IMR-90 (cell line): ENCODE measurements at regions of chr5 and their contacts with region 1.

Region 1: DNA sequence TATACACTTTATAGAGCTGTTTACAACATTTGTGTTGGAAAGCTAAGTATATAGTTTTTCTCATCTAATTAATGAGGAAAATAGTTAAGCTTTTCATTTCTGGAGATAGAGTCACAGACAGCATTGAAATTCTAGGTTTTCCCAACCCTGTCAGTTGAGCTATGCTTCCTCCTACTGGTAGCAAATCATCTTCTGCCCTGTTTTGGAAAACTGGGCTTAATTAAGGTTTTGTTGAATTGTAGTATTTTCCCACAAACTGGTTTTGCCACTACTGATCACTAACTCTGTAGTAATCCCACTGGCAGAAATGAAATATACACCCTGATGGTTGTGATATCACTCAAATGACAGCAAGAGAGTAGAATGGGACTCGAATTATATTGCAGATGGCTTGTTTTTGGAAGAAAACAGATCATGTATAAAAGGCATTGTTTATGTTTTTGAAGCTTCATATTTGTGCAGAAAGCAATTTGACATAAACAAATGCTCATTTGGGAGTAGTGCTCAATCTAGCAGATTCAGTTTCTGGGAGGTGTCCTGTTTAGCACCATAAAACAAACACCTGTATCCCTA is 46.6 kb downstream of the CD180 start:
- DNase-seq: peak; percentile 48
- ATAC-seq: peak; percentile 65; the same call in 1 of the 2 replicates
- H3K4me3 ChIP-seq: no peak overlapping the region
- H3K27ac ChIP-seq: no peak overlapping the region
- H3K4me1 ChIP-seq: peaks cover 2% of the 10 kb centered on the region; the same call in 1 of the 2 replicates
- H3K27me3 ChIP-seq: no peaks in the 10 kb centered on the region
- CTCF ChIP-seq: peak; percentile 79
- POLR2A ChIP-seq: no peak
- RAD21 ChIP-seq: peak; percentile 88

Region 2: DNA sequence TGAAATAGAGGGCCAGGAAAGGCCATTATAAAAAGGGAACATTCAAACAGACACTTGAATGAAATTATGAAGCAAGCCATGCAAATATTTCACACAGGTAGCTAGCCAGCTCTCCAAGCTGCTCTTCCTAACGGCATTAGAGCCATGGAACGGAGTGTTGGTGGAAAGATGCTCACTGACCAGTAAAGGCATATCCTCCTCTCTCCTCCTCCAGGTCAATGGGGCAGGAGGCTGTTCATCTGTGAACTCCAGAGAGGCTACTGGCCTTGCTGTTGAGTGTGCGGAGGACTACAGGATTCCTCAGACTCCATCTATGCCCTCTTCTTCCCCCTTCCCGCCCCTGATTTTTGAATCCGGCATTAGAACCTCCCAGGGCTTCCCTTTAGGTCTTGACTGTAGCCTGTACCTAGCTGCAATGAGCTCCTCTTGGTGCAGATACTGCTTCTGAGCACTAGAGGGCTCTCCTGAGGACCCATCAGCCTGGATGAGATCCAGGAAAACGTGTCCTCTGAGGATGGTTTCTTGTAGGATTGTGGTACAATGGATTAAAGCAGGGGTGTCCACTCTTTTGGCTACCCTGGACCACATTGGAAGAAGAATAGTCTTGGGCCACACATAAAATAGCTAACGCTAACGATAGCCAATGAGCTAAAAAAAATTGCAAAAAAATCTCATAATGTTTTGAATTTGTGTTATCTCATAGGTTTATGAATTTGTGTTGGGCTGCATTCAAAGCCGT is 843.8 kb before region 1 on chr5:
- CTCF ChIA-PET with region 1: no interaction called
- POLR2A ChIA-PET with region 1: no interaction called
- dilution Hi-C with region 1: no loop called
- in situ Hi-C with region 1: no loop called
- intact Hi-C with region 1: loop called (anchors 5 kb)
- DNase-seq: peak; percentile 63
- ATAC-seq: peak; percentile 97
- H3K4me3 ChIP-seq: no peak overlapping the region
- H3K27ac ChIP-seq: no peak overlapping the region
- H3K4me1 ChIP-seq: no peaks in the 10 kb centered on the region
- H3K27me3 ChIP-seq: peaks cover 5% of the 10 kb centered on the region
- CTCF ChIP-seq: peak; percentile 80
- POLR2A ChIP-seq: no peak
- RAD21 ChIP-seq: peak; percentile 42

Region 3: DNA sequence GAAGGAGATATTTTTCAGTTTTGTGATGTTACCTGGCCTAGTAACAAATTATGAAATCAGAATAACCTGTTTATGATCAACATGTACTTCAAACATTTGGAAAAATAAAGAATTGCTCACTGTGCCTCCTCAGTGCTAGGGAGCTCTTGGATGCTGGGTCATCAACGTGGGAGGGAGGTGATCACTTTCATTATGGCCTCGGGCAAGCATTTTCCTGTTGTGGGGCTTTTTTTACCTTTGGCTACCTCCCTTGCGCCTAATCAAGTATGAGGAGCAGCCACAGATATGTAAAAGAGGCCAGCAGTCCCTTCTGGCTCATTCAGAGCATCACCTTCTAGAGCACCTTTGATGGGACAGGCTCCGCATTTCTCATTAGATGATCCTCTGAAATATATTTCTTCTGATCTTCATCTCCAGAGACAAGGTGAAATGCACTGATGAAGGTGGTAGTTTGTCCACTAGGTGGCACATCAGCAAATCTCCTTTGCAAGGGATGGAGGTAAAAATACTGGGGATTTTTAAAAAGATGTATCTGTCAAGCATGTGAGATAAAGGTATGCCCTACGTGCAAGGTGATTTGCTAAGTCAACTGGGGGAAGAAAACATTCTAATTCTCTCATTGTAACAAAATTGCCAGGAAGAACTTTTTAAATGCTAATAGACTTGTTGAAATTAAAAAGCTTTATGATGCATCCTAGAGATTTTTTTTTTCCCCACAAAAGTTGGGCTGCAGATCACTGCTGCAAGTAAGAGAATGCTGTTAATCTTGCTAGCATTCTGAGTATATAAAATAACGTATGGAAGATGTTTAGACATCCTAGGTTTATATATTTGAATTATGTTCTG is 335.7 kb before region 1 on chr5:
- CTCF ChIA-PET with region 1: interaction called, 8 read pairs
- POLR2A ChIA-PET with region 1: no interaction called
- dilution Hi-C with region 1: no loop called
- in situ Hi-C with region 1: loop called (anchors 5 kb)
- intact Hi-C with region 1: loop called (anchors 1 kb)
- DNase-seq: peak; percentile 63
- ATAC-seq: peak; percentile 77
- H3K4me3 ChIP-seq: no peak overlapping the region
- H3K27ac ChIP-seq: no peak overlapping the region
- H3K4me1 ChIP-seq: no peaks in the 10 kb centered on the region
- H3K27me3 ChIP-seq: peaks cover 17% of the 10 kb centered on the region
- CTCF ChIP-seq: peak; percentile 73
- POLR2A ChIP-seq: no peak
- RAD21 ChIP-seq: peak; percentile 68

Region 4: GRCh38 chr5:66864331-66864840 is 285.7 kb before region 1 on chr5:
- CTCF ChIA-PET with region 1: no interaction called
- POLR2A ChIA-PET with region 1: no interaction called
- dilution Hi-C with region 1: no loop called
- in situ Hi-C with region 1: no loop called
- intact Hi-C with region 1: loop called (anchors 5 kb)
- DNase-seq: peak; percentile 47
- ATAC-seq: peak; percentile 64
- H3K4me3 ChIP-seq: no peak overlapping the region
- H3K27ac ChIP-seq: no peak overlapping the region
- H3K4me1 ChIP-seq: no peaks in the 10 kb centered on the region
- H3K27me3 ChIP-seq: peaks cover 12% of the 10 kb centered on the region
- CTCF ChIP-seq: peak; percentile 54
- POLR2A ChIP-seq: no peak
- RAD21 ChIP-seq: peak; percentile 57

Region 5: DNA sequence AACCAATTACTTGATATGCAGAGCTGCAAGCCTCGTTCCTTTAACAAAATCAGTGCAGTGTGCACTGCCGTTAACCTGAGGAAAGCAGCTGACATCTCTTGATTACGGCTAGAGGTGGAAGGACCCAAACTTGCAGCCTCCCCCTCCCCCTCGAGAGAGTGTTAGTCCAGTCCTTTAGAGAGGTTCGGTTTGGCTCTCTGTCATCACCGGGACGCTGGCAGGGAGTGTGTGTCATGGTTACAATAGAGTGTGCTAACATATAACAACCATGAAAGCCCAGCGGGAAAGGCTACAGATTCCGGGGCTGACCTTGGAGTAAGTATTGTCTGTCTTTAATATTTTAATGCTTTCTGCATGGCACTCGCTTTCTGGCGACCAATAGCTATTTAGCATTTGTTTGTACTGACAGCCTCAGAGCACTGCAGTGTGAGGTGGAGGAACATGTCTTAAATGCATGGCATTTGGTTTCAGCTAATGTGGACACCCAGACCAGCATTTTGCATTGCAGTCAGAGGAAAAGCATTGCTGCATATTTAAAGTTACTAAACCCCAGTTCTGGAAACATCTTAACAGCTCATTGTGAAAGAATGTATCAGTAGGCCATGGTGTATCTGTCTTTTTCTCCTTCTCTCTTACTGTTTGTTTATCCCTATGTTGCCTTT is 190.9 kb before region 1 on chr5:
- CTCF ChIA-PET with region 1: interaction called, 7 read pairs
- POLR2A ChIA-PET with region 1: interaction called, 4 read pairs
- dilution Hi-C with region 1: no loop called
- in situ Hi-C with region 1: no loop called
- intact Hi-C with region 1: loop called (anchors 1 kb)
- DNase-seq: peak; percentile 80
- ATAC-seq: peak; percentile 62
- H3K4me3 ChIP-seq: peak overlapping the region; percentile 51
- H3K27ac ChIP-seq: peak overlapping the region; percentile 81
- H3K4me1 ChIP-seq: peaks cover 8% of the 10 kb centered on the region
- H3K27me3 ChIP-seq: no peaks in the 10 kb centered on the region
- CTCF ChIP-seq: no peak
- POLR2A ChIP-seq: no peak
- RAD21 ChIP-seq: no peak

Region 6: GRCh38 chr5:66987949-66988838 is 161.8 kb before region 1 on chr5:
- CTCF ChIA-PET with region 1: interaction called, 4 read pairs
- POLR2A ChIA-PET with region 1: no interaction called
- dilution Hi-C with region 1: no loop called
- in situ Hi-C with region 1: no loop called
- intact Hi-C with region 1: loop called (anchors 2 kb)
- DNase-seq: peak; percentile 26
- ATAC-seq: peak; percentile 67
- H3K4me3 ChIP-seq: no peak overlapping the region
- H3K27ac ChIP-seq: no peak overlapping the region
- H3K4me1 ChIP-seq: peaks cover 6% of the 10 kb centered on the region
- H3K27me3 ChIP-seq: no peaks in the 10 kb centered on the region
- CTCF ChIP-seq: peak; percentile 70
- POLR2A ChIP-seq: no peak
- RAD21 ChIP-seq: peak; percentile 65

Region 7: DNA sequence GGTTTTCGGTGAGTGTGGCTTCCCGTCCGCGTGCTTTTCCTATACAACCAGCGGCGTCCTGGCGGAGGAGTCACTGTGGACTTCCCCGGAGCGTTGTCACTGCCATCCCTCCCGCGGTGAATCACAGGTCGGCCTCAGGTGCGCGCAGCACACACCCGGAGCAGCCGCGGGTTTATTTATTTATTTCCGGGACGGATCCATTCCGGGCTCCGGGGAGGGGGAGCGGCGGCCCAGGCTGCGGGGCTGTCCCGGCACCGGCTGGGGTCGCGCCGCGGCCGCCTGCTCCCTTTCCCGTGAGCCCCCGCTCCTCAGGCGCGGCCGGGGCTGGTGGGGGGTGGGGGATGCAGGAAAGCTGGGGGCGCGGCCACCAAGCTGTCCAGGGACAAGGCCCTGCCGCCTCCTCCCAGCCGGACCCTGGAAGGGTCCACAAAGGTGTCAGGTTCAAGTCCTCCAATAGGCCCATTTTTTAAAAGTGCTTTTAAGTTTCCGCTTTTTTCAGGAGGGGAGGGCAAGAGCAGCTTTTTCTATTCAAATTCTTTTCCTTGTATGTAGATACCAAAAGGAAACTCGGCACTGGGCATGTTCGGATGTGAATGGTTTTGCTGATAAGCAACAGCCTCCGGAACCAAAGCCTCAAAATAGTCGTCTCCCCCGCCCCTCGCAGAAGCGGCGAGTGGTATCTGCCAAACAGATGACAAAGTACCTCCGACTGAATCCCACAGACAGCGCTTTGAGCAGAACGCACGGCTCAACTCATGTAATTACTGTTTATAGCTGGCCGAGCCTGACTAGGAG is 145.9 kb before region 1 on chr5:
- CTCF ChIA-PET with region 1: no interaction called
- POLR2A ChIA-PET with region 1: no interaction called
- dilution Hi-C with region 1: no loop called
- in situ Hi-C with region 1: no loop called
- intact Hi-C with region 1: loop called (anchors 5 kb)
- DNase-seq: peak; percentile 88
- ATAC-seq: peak; percentile 84
- H3K4me3 ChIP-seq: peak overlapping the region; percentile 54
- H3K27ac ChIP-seq: peak overlapping the region; percentile 52
- H3K4me1 ChIP-seq: peaks cover 6% of the 10 kb centered on the region
- H3K27me3 ChIP-seq: no peaks in the 10 kb centered on the region
- CTCF ChIP-seq: no peak
- POLR2A ChIP-seq: peak; percentile 79; the same call in 1 of the 2 replicates
- RAD21 ChIP-seq: peak; percentile 14; the same call in 1 of the 2 replicates